ENCODE measurements at regions of chr11 and their contacts with region 1.

Region 1: GRCh38 chr11:87236368-87236767 is 198.6 kb downstream of the TMEM135 start:
- DNase-seq: no peak
- ATAC-seq: no peak
- H3K4me3 ChIP-seq: no peak overlapping the region
- H3K27ac ChIP-seq: no peak overlapping the region
- H3K4me1 ChIP-seq: no peaks in the 10 kb centered on the region
- H3K27me3 ChIP-seq: no peaks in the 10 kb centered on the region

Region 2: GRCh38 chr11:87173185-87174039 is 63.0 kb before region 1 on chr11:
- intact Hi-C with region 1: loop called in 1 of 2 experiments (anchors 10 kb)
- DNase-seq: no peak
- ATAC-seq: peak; percentile 52
- H3K4me3 ChIP-seq: no peak overlapping the region
- H3K27ac ChIP-seq: no peak overlapping the region
- H3K4me1 ChIP-seq: no peaks in the 10 kb centered on the region
- H3K27me3 ChIP-seq: no peaks in the 10 kb centered on the region